GM13977 (cell line): ENCODE measurements at regions of chr10 and their contacts with region 1.

Region 1: DNA sequence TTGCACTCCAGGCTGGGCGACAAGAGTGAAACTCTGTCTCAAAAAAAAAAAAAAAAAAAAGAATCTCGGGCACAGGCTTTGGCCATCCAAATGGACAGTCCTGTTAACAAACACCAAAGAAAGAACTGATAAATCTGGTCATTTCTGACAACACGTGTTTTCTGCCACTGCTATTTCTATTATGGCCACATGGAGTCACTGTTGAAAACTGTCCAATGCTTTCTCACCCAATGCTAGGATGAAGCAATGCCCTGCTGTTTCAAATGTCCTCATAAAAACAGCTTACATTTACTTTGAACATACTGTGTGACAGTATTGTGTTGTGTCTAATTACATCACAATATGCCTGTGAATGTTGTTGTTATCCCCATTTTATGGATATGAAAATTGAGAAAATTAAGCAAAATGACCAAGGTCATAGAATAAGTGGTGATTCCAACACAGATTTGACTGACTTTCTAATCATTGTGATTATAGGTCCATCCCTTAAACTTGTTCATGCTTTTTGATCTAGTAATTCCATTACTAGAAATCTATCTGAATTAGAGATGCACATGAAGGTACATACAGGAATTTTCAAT is 19.9 kb upstream of the MAP3K8 start:
- DNase-seq: no peak
- CTCF ChIP-seq: peak; percentile 80

Region 2: GRCh38 chr10:30070001-30070685 is 343.9 kb before region 1 on chr10:
- in situ Hi-C with region 1: no loop called
- DNase-seq: no peak
- CTCF ChIP-seq: no peak

Region 3: DNA sequence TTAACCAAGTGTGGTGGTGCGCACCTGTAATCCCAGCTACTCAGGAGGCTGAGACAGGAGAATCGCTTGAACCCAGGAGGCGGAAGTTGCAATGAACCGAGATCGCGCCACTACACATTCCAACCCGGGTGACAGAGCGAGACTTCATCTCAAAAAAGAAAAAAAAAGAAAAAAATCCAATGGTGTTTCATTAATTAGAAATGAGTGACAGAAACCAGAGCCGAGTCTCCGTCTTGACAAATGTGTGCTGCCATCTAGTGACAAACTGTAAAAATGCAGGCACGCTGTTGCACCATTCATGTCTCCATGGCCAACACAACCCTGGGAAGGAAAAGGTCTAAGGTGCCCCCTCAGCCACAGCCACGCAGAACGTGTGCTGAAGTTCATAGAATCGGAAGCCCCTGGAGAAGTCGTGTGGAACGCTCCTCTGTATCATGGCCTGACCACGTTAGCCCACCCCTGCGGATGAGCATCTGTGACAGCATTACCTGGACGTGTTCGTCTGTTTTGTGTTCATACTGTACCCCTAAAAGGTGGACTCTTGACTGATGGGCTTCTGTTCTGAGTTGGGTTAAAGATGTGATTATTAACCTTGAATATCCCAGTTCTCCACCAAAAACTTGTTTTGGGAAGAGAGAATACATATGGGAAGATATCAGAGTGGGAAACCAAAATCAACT is 120.5 kb after region 1 on chr10:
- in situ Hi-C with region 1: loop called (anchors 10 kb)
- DNase-seq: peak; percentile 54
- CTCF ChIP-seq: peak; percentile 87

Region 4: DNA sequence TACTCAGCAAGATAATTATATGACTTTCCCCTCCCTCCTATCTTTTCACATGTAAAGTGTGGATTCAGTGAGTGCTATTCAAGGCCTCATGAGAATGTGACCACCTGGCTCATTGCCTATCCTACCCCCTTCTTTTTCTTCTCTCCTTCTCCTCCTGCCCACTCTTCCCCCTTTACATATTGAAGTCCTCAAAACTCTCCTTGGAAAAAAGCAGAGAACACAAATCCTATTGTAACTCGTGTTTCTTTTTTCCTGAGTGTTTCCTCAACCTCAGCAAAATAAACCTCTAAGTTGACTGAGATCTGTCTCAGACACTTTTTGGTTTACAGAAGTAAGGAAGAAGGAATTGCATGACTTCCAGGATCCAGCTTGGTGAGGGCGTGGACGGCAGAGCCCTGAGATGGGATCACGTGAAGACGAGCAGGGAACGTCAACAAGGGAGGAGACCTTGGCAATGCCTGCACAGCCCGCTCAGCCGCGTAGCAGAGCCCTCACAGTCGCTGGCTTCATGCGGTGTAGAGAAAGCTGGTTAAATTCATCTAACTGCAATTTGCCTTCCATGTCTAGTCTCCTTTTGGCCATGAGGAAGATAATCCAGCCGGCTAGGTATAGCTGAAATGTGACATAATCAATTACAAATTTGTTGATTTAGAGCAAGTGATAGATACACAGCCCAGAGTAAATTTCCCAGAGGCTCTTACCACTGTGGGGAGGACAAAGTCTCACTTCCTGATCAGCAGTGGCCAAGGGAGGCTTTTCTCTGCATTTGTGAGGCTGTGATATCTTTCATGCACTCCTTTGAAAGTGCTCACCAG is 139.7 kb after region 1 on chr10:
- in situ Hi-C with region 1: no loop called
- DNase-seq: no peak
- CTCF ChIP-seq: no peak

Region 5: DNA sequence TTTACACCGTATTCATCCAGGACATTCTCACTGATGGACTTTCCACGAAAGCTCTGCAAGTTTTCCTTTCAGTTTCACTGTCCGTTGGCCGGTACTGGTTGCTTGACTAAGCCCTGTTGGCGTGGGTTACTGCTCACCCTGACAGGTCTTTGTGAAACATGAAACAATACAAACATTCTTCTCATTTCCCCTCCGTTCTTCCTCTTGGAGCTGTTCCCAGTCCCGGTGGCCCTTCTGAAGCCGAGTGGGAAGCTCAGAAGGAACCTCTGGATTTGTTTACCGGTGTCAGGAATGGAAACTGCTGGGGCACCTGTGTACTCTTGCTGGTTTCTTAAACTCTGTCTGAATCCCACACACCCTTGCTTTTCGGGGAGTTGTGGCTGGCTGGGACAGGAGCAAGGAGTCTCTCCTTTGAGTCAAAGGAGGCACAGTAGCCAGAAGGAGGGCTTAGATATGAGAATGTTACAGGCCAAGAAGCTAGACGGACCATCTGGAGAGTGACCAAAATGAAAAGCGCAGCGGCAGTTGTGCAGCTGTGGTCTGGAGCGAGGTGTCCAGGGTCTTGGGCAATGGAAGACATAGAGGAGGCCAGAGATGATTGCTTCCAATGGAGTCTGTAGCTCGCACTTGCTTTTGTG is 169.8 kb after region 1 on chr10:
- in situ Hi-C with region 1: loop called (anchors 10 kb)
- DNase-seq: peak; percentile 34
- CTCF ChIP-seq: no peak

Region 6: GRCh38 chr10:30606313-30606712 is 192.2 kb after region 1 on chr10:
- in situ Hi-C with region 1: no loop called
- DNase-seq: no peak
- CTCF ChIP-seq: no peak